ENCODE measurements at regions of chr16 and their contacts with region 1.

Region 1: DNA sequence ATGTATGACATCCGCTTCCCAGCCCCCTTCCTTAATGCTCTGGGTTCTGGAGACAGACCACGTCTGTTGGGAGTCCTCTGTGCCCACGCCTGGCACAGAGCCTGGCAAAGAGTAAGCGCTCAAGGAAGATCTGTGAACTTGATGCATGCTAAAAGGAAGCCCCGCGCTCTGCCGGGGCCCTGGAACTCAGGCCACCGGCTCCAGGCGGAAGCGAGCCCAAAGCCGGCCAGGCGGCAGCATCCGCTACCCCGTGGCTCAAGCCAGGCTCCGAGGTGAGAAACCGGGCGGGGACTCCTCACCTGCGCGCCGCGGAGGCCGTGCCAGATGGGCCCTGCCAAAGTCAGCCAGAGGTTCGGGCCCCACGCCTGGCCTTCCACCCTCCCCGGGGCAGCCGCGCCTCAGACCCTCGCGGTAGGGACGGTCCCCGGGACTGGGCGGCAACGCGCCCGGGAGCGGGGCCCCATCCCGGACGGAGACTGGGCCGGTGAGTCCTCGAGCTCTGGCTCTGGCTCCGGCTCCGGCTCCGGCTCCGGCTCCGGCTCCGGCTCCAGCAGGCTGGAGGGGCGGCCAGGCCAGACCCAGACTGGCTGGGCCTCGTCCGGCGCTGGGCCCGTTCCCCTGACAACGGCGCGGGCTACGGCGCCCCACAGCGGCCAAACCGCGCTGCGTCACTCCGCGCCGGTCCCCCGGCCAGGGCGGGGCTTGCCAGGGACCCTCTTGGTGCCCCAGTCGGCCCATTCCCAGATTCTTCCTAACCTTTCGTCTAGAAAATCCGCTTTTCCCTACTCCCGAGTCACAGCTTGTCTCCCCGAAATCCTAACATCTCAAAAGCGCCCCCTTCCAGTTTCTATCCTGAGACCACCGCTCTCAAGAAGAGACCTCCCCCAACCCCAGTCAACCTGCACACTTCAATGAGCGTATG is at the start of gene ZDHHC1:
- DNase-seq: peak; percentile 51 to 77
- H3K4me3 ChIP-seq: peak within 1 kb of the TSS; percentile 78 to 96 (median 79)
- H3K27ac ChIP-seq: peak within 1 kb of the TSS; percentile 95 to 97
- H3K4me1 ChIP-seq: no peaks in the 10 kb centered on the region
- H3K27me3 ChIP-seq: no peaks in the 10 kb centered on the region
- CTCF ChIP-seq: peak in 2 of 3 donors; percentile 40 to 52
- POLR2A ChIP-seq: peak; percentile 44
- total RNA-seq, gene ZDHHC1: 17.4 to 20.3 (median 19.3) TPM

Region 2: DNA sequence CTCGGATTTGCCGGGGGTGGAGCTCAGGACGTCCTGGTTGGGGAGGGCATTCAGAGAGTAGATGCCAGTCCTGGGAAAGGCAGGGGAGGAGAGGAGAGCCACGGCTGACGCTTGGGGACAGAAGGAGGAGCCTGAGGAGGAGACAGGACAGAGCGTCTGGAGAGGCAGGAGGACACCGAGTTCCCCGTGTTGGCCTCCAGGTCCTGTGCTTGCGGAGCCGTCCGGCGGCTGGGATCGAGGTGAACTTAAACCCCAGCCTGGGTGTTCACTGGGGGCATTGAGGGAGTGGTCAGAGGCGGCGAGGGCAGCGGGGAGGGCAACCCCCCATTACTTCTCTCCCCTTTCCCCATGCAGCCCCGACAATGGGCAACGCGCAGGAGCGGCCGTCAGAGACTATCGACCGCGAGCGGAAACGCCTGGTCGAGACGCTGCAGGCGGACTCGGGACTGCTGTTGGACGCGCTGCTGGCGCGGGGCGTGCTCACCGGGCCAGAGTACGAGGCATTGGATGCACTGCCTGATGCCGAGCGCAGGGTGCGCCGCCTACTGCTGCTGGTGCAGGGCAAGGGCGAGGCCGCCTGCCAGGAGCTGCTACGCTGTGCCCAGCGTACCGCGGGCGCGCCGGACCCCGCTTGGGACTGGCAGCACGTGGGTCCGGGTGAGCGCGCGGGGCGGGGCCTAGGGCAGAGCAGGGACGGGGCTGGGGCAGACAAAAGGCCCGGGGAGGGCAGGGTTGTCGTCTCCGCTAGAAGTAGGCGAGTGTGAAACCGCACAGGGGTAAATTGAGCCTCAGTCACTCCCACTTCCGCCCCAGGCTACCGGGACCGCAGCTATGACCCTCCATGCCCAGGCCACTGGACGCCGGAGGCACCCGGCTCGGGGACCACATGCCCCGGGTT is 242.1 kb before region 1 on chr16:
- intact Hi-C with region 1: loop called (anchors 10 kb)
- DNase-seq: peak; percentile 81 to 86
- H3K4me3 ChIP-seq: peak overlapping the region; percentile 37 to 75 (median 59)
- H3K27ac ChIP-seq: peak overlapping the region; percentile 89 to 96
- H3K4me1 ChIP-seq: peaks cover 5 to 16% of the 10 kb centered on the region in 2 donors
- H3K27me3 ChIP-seq: no peaks in the 10 kb centered on the region
- CTCF ChIP-seq: peak in 1 of 3 donors; percentile 13
- POLR2A ChIP-seq: no peak

Region 3: DNA sequence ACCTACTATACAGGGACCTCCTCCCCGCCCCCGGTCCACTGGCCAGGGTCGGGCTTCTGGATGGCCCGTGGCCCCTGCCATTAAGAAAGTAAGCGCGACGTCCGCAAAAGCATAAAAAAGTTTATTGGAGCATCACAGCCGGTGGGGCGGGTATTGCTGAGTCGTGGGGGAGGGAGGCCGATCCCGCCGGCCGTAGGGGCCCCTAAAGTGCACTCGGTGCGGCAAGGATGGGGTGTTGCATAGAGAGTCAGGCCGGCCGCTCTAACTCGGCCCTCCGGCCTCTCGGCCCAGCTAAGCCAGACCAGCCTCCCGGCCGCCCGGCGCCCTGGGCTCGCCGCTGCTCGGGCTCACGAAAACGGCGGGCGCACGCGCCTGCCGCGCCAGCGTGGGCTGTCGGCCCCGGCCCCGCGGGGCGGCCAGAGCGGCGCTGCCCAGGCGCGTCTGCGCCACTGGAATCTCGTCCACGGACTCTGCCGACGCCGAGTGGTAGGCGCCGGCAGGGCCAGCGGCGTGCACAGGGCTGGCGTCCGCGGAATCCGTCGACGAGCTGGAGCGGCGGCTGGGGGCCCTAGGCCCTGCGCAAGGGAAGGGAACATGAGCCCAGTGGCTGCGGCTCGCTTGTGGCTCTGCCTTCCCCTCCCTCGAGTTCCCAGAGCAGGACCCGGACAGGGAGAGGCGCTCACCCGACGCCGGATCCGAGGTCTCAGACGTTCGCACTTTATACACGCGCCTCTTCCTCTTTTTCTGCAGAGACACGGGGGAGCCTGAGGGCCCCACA is 21.6 kb before region 1 on chr16:
- intact Hi-C with region 1: loop called (anchors 1 kb)
- DNase-seq: no peak
- H3K4me3 ChIP-seq: peak overlapping the region; percentile 42 to 65 (median 43)
- H3K27ac ChIP-seq: peak overlapping the region; percentile 73 to 82
- H3K4me1 ChIP-seq: peaks cover 6 to 25% of the 10 kb centered on the region in 2 donors
- H3K27me3 ChIP-seq: no peaks in the 10 kb centered on the region
- CTCF ChIP-seq: no peak
- POLR2A ChIP-seq: no peak